ENCODE measurements at regions of chr5 and their contacts with region 1.

Region 1: GRCh38 chr5:96220610-96221390 is 212.2 kb downstream of the PCSK1 start:
- DNase-seq: peak; percentile 37
- H3K4me3 Mint-ChIP-seq: no peak overlapping the region
- H3K27ac Mint-ChIP-seq: peak overlapping the region; percentile 78
- H3K4me1 Mint-ChIP-seq: peaks cover 22% of the 10 kb centered on the region
- H3K27me3 Mint-ChIP-seq: peaks cover 3% of the 10 kb centered on the region

Region 2: DNA sequence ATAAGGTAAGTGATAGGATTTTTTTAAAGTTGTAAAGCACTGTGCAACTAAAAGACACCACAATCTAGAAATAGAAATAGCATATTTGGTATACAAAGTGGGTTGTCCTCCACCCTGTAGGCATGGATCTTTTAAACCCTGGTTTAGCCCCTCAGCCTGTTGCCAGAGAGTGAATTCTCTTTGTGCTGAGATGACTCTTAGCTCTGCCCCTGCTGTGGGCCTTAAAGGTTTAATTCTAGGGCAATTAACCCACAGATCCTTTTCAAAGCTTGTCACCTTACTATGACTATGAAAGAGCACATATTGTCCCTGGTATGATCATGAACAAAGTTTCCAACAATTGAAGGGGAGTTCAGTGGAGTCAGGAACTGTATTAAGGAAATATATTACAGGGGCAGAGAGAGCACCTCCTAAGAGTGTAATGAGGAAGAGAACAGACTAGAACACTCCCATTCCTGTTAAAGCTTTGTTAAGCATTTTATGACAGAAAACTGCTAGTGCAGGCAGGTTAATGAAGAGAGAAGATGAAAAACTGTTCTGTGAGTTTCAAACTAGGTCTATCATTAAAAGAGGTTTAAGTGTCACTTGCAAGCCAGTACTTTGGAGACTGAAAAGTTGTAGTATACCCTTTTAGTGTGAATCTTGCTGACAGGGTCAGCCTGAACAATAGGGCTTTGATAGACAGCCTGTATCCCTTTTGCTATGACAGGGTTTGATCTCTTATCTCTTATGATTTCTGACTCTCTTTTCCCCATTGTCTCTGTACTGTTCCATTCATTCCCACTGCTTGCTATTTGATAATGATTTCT is 155.0 kb before region 1 on chr5:
- CTCF ChIA-PET with region 1: no interaction called
- POLR2A ChIA-PET with region 1: no interaction called
- intact Hi-C with region 1: loop called (anchors 2 kb)
- DNase-seq: peak; percentile 38
- H3K4me3 Mint-ChIP-seq: no peak overlapping the region
- H3K27ac Mint-ChIP-seq: peak overlapping the region; percentile 83
- H3K4me1 Mint-ChIP-seq: peaks cover 48% of the 10 kb centered on the region
- H3K27me3 Mint-ChIP-seq: no peaks in the 10 kb centered on the region

Region 3: GRCh38 chr5:96151891-96152290 is 68.9 kb before region 1 on chr5:
- CTCF ChIA-PET with region 1: no interaction called
- POLR2A ChIA-PET with region 1: no interaction called
- intact Hi-C with region 1: loop called (anchors 1 kb)
- DNase-seq: peak; percentile 33
- H3K4me3 Mint-ChIP-seq: no peak overlapping the region
- H3K27ac Mint-ChIP-seq: no peak overlapping the region
- H3K4me1 Mint-ChIP-seq: peaks cover under 1% of the 10 kb centered on the region
- H3K27me3 Mint-ChIP-seq: no peaks in the 10 kb centered on the region

Region 4: DNA sequence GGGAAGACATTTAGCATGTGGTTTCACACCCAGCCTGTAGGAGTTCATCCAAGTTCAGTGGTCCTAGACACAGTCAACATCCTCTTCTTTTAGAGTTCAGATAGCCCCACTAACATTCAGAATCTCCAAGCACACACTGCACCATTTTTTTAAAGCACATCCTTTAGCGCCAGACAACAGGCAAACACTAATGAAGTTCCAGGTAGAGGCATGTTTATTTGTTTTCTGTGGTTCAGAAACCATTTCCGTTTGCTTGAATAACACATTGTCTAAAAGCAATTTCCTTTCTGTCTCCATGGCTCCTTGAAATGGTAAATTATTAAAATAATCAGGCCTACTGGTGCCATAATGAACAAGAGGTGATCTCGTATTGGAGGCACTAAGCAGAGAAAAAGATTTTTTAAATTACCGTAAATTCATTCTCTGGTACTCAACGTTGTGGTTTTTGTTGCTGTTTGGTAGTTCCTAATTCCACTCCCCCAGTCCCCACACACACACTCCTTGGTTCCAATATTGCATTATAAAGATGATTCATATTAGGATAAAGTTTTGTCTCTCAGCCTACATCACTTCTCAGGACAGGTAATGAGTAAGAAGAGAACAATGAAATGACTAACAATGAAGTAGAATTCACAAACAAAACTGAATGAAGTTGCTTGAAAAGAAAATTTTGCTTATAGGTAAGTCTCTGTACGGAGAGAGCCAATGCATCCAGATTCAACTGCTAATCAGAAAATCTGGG is 59.2 kb after region 1 on chr5:
- CTCF ChIA-PET with region 1: no interaction called
- POLR2A ChIA-PET with region 1: no interaction called
- intact Hi-C with region 1: loop called (anchors 1 kb)
- DNase-seq: peak; percentile 51
- H3K4me3 Mint-ChIP-seq: peak overlapping the region; percentile 7
- H3K27ac Mint-ChIP-seq: peak overlapping the region; percentile 31
- H3K4me1 Mint-ChIP-seq: peaks cover 26% of the 10 kb centered on the region
- H3K27me3 Mint-ChIP-seq: peaks cover 29% of the 10 kb centered on the region

Measured in activated CD4-positive, alpha-beta memory T cell treated with anti-CD3 and anti-CD28 coated beads for 36 hours (primary cell).